T-cell (primary cell): ENCODE measurements at regions of chr12 and their contacts with region 1.

Region 1: DNA sequence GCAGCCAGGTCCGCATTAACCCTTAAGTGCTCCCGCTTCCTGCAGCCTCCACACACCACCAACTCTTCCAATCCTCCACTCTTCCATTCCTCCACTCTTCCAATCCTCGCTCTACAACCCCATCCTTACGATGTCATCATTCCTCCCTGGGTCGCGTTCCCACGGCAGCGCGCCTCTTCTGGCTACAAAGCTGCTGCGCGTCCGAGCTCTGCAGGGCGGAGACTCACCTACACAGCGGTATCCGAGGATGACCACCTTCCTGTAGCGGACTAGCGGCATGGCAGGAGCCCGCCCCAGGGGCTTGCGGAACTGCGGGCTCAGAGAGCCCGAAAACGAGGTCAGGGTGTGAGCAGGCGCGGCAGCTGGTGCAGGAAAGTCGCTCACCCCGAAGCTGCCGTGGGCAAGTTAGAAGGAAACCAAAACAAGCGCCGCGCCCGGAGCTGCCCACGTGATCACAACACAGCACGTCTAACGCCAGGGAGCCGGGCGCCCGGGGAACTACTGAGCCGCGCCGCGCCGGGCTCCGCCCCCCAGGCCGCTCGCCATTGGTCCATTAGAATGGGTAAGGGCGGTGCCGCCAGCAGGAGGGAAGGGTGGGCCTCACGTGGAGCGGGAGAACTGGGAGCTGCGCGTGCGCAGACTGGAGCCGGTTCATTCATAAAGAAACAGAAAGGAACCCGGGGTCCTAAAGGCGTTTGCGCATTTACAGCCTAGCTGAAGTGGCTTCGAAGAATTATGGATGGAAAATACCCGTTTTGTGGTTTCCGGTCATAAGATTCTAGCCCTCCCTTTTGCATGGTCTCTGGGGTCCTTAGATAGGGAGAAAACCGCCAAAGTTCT is at the start of gene RHEBL1:
- DNase-seq: peak; percentile 94 to 99 (median 96)
- ATAC-seq: peak; percentile 99 to 100 (median 100)
- H3K4me3 ChIP-seq: peak within 1 kb of the TSS; percentile 85 to 91
- H3K4me3 Mint-ChIP-seq: peak within 1 kb of the TSS; percentile 86 to 100 (median 99)
- H3K27ac ChIP-seq: peak within 1 kb of the TSS; percentile 68
- H3K27ac Mint-ChIP-seq: peak within 1 kb of the TSS; percentile 87 to 96
- H3K4me1 ChIP-seq: peaks cover 6 to 17% of the 10 kb centered on the region in 2 experiments
- H3K4me1 Mint-ChIP-seq: peaks cover 18 to 19% (median 19%) of the 10 kb centered on the region in 3 donors
- H3K27me3 ChIP-seq: no peaks in the 10 kb centered on the region
- H3K27me3 Mint-ChIP-seq: no peaks in the 10 kb centered on the region
- total RNA-seq, gene RHEBL1: 2.3 to 5.3 (median 2.5) TPM

Region 2: GRCh38 chr12:48995061-48995879 is 74.5 kb before region 1 on chr12:
- CTCF ChIA-PET with region 1: no interaction called
- POLR2A ChIA-PET with region 1: no interaction called
- DNase-seq: peak in 10 of 35 experiments; percentile 32 to 68 (median 45)
- ATAC-seq: peak in 3 of 4 experiments; percentile 19 to 35 (median 33)
- H3K4me3 ChIP-seq: no peak overlapping the region
- H3K4me3 Mint-ChIP-seq: peak overlapping the region in 2 of 3 donors; percentile 10 to 65
- H3K27ac ChIP-seq: no peak overlapping the region
- H3K27ac Mint-ChIP-seq: peak overlapping the region in 1 of 2 donors; percentile 41
- H3K4me1 ChIP-seq: peaks cover 3 to 42% of the 10 kb centered on the region in 2 experiments
- H3K4me1 Mint-ChIP-seq: peaks cover 35 to 42% (median 39%) of the 10 kb centered on the region in 3 donors
- H3K27me3 ChIP-seq: peaks cover 7 to 80% of the 10 kb centered on the region in 2 experiments
- H3K27me3 Mint-ChIP-seq: peaks cover 39 to 57% of the 10 kb centered on the region in 2 donors

Region 3: GRCh38 chr12:49088190-49088931 is 18.6 kb after region 1 on chr12:
- CTCF ChIA-PET with region 1: interaction called, 16 to 37 read pairs
- POLR2A ChIA-PET with region 1: interaction called in 1 of 2 experiments, 3 read pairs
- DNase-seq: peak in 33 of 35 experiments; percentile 35 to 89 (median 58)
- ATAC-seq: peak; percentile 77 to 89 (median 86)
- H3K4me3 ChIP-seq: no peak overlapping the region
- H3K4me3 Mint-ChIP-seq: peak overlapping the region in 1 of 3 donors; percentile 80
- H3K27ac ChIP-seq: no peak overlapping the region
- H3K27ac Mint-ChIP-seq: no peak overlapping the region
- H3K4me1 ChIP-seq: peaks cover 8 to 49% of the 10 kb centered on the region in 2 experiments
- H3K4me1 Mint-ChIP-seq: peaks cover 33 to 52% (median 40%) of the 10 kb centered on the region in 3 donors
- H3K27me3 ChIP-seq: peaks cover 12 to 53% of the 10 kb centered on the region in 2 experiments
- H3K27me3 Mint-ChIP-seq: peaks cover 28 to 45% of the 10 kb centered on the region in 2 donors

Region 4: GRCh38 chr12:49098035-49098451 is 28.3 kb after region 1 on chr12:
- CTCF ChIA-PET with region 1: interaction called, 11 to 37 read pairs
- POLR2A ChIA-PET with region 1: interaction called in 1 of 2 experiments, 3 read pairs
- DNase-seq: peak in 31 of 35 experiments; percentile 16 to 78 (median 54)
- ATAC-seq: peak; percentile 54 to 68 (median 62)
- H3K4me3 ChIP-seq: no peak overlapping the region
- H3K4me3 Mint-ChIP-seq: no peak overlapping the region
- H3K27ac ChIP-seq: no peak overlapping the region
- H3K27ac Mint-ChIP-seq: no peak overlapping the region
- H3K4me1 ChIP-seq: peaks cover 0 to 14% of the 10 kb centered on the region in 2 experiments
- H3K4me1 Mint-ChIP-seq: peaks cover 8 to 23% (median 14%) of the 10 kb centered on the region in 3 donors
- H3K27me3 ChIP-seq: peaks cover 0 to 20% of the 10 kb centered on the region in 2 experiments
- H3K27me3 Mint-ChIP-seq: peaks cover 17 to 22% of the 10 kb centered on the region in 2 donors

Region 5: DNA sequence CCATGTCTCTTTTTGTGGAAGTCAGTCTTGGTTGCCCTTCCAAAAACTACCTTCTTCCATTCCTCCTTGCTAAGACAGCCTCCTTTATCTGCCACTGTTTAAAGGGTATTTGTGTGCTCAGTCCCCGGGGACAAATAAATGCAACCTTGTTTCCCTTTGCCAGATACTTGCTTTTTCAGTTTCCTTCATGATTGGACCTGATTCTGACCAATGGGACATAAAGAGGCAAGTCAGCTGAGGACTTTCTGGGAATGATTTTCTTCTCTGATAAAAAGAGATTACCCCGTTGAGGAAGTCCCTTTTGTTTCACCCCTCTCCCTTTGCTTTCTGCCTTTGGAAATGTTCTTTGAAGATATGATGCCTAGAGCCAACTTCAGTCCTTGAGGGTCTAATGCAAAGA is 68.9 kb after region 1 on chr12:
- CTCF ChIA-PET with region 1: no interaction called
- POLR2A ChIA-PET with region 1: no interaction called
- DNase-seq: no peak
- ATAC-seq: no peak
- H3K4me3 ChIP-seq: no peak overlapping the region
- H3K4me3 Mint-ChIP-seq: no peak overlapping the region
- H3K27ac ChIP-seq: no peak overlapping the region
- H3K27ac Mint-ChIP-seq: no peak overlapping the region
- H3K4me1 ChIP-seq: no peaks in the 10 kb centered on the region
- H3K4me1 Mint-ChIP-seq: peaks cover 2 to 4% (median 2%) of the 10 kb centered on the region in 3 donors
- H3K27me3 ChIP-seq: no peaks in the 10 kb centered on the region
- H3K27me3 Mint-ChIP-seq: no peaks in the 10 kb centered on the region

Region 6: GRCh38 chr12:49273726-49274395 is 204.1 kb after region 1 on chr12:
- CTCF ChIA-PET with region 1: interaction called, 7 to 10 read pairs
- POLR2A ChIA-PET with region 1: no interaction called
- DNase-seq: no peak
- ATAC-seq: no peak
- H3K4me3 ChIP-seq: no peak overlapping the region
- H3K4me3 Mint-ChIP-seq: no peak overlapping the region
- H3K27ac ChIP-seq: no peak overlapping the region
- H3K27ac Mint-ChIP-seq: no peak overlapping the region
- H3K4me1 ChIP-seq: no peaks in the 10 kb centered on the region
- H3K4me1 Mint-ChIP-seq: peaks cover 0 to 6% (median 0%) of the 10 kb centered on the region in 3 donors
- H3K27me3 ChIP-seq: no peaks in the 10 kb centered on the region
- H3K27me3 Mint-ChIP-seq: no peaks in the 10 kb centered on the region